HEK293 (cell line): ENCODE measurements at regions of chr11 and their contacts with region 1.

Region 1: DNA sequence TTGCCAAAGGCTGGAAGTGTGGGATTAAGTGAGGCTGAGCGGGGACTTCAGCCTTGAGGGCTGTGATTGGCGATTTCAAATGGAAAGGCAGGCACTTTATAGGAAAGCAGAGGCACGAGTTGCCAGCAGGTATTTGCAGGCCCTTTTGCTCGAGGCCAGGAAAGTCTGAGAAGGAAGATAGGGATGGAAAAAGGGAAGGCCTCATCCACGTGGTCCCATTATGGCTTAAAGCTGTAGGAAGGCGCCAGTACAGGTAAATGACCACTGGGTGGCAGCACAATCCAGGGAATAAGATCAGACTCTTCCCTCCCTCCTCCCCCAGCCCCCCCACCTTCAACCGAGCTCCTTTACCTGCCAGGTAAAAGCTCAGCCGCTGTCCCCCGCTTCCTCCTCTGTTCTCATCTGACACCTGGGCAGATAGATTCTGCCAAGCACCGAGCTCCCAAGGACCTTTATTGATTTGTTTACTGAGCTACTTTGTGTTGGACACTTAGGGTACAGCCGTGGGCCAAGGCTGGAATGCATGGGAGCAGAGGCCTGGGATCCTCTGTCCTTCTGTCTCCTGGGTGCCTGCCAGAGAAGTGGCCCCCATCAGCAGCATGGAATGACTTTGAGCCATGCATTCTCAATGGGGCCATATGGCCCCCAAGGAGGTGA is 7.5 kb downstream of the P2RX3 start:
- H3K4me3 ChIP-seq: no peak overlapping the region
- H3K27ac ChIP-seq: no peak overlapping the region
- H3K4me1 ChIP-seq: no peaks in the 10 kb centered on the region
- CTCF ChIP-seq: 0 out of 2 replicates have a peak, but pooled peaks have one; percentile 26

Region 2: DNA sequence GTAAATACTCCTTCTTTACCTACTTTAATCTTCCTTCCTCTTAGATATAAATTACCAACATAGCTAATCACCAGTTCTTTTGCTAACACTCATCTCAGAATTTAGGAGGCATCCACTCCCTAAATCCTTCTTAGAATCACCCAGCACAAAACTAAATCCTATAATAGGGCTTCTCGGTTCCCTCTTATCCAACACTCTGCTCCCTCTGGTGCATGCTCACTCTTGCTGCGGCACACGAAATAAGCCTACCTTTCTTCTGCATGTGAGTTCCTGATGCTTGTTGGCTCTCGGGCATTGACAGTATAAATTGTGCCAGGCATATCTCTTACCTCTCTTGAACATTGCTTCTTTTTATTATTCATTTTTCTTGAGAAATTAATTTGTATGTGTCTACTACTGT is 295.9 kb before region 1 on chr11:
- CTCF ChIA-PET with region 1: no interaction called
- POLR2A ChIA-PET with region 1: no interaction called
- H3K4me3 ChIP-seq: no peak overlapping the region
- H3K27ac ChIP-seq: no peak overlapping the region
- H3K4me1 ChIP-seq: no peaks in the 10 kb centered on the region
- CTCF ChIP-seq: no peak

Region 3: GRCh38 chr11:57358543-57358961 is 12.9 kb after region 1 on chr11:
- CTCF ChIA-PET with region 1: interaction called, 10 read pairs
- POLR2A ChIA-PET with region 1: no interaction called
- H3K4me3 ChIP-seq: no peak overlapping the region
- H3K27ac ChIP-seq: no peak overlapping the region
- H3K4me1 ChIP-seq: no peaks in the 10 kb centered on the region
- CTCF ChIP-seq: no peak

Region 4: DNA sequence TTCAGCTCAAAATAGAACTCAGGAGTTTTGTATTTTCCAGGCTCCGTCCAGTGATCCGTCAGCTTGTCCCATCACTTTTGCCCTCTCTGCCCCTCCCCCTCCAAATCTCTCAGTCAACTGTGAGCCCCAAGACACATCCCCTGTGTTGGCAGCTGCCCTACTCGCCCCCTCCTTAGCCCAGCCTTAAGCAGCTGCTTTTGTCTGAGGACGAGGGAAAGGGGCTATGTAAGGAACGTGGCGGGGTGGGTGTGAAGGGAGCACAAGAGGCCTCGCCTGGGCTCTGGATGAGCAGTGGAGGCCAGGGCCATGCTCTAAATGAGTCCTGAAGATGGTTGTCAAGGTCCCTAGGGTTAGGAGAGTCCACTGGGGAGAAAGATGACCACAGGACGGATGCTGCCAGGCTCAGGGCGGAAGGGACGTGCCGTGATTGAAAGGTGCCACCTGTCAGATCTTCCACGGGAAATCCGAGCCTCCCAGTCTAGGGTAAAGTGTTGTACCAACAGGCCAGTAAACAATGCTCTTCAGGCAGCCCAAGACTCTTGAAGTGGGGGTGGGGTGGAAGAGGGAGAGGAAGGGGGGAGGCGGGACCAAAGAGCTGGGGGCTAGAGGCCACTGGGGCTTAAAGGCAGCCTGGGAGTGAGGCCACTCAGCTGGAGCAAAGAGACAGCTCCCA is 191.4 kb after region 1 on chr11 and contains the start of gene SMTNL1:
- CTCF ChIA-PET with region 1: no interaction called
- POLR2A ChIA-PET with region 1: no interaction called
- H3K4me3 ChIP-seq: no peak within 1 kb of the TSS
- H3K27ac ChIP-seq: no peak within 1 kb of the TSS
- H3K4me1 ChIP-seq: no peaks in the 10 kb centered on the region
- CTCF ChIP-seq: no peak

Region 5: DNA sequence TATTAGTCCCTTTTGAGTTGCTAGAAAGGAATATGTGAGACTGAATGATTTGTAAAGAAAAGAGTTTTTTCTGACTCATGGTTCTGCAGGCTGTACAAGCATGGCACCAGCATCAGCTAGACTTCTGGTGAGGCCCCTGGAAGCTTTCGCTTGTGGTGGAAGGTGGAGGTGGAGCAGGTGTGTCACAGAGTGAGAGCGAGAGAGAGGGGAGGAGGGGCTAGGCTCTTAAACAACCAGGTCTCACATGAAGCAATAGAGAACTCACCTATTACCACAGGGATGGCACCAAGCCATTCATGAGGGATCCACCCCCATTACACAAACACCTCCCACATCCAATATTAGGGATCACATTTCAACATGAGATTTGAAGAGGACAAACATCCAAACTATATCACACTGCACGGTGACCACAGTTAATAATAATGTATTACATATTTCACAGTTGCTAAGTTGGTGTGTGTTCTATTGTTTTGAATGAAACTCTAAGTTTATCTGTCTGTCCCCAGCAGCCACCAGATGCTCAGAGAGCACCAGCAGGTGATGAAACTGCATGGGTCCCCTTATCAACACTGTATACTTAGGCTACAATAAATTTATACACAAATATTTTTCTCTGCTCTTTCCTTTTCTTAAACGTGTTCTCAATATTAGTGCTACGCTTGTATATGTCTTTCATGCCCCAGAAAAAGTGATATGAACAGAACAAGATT is 1247.2 kb after region 1 on chr11:
- CTCF ChIA-PET with region 1: interaction called, 11 read pairs
- POLR2A ChIA-PET with region 1: no interaction called
- H3K4me3 ChIP-seq: no peak overlapping the region
- H3K27ac ChIP-seq: no peak overlapping the region
- H3K4me1 ChIP-seq: peaks cover 6% of the 10 kb centered on the region; the same call in 1 of the 2 replicates
- CTCF ChIP-seq: no peak